ENCODE measurements at regions of chr15 and their contacts with region 1.

Region 1: GRCh38 chr15:73081321-73081958 is 29.2 kb downstream of the NEO1 start:
- DNase-seq: peak; percentile 8
- ATAC-seq: no peak
- H3K4me3 Mint-ChIP-seq: no peak overlapping the region
- H3K27ac Mint-ChIP-seq: no peak overlapping the region
- H3K4me1 Mint-ChIP-seq: no peaks in the 10 kb centered on the region
- H3K27me3 Mint-ChIP-seq: no peaks in the 10 kb centered on the region

Region 2: GRCh38 chr15:72796515-72797337 is 284.7 kb before region 1 on chr15:
- CTCF ChIA-PET with region 1: interaction called, 5 read pairs
- POLR2A ChIA-PET with region 1: no interaction called
- intact Hi-C with region 1: loop called (anchors 1 to 2 kb)
- DNase-seq: peak; percentile 58
- ATAC-seq: peak; percentile 82
- H3K4me3 Mint-ChIP-seq: peak overlapping the region; percentile 67
- H3K27ac Mint-ChIP-seq: no peak overlapping the region
- H3K4me1 Mint-ChIP-seq: peaks cover 9% of the 10 kb centered on the region
- H3K27me3 Mint-ChIP-seq: peaks cover 24% of the 10 kb centered on the region